Sigmoid colon (tissue), 7 donors: ENCODE measurements at regions of chr5 and their contacts with region 1.

Region 1: DNA sequence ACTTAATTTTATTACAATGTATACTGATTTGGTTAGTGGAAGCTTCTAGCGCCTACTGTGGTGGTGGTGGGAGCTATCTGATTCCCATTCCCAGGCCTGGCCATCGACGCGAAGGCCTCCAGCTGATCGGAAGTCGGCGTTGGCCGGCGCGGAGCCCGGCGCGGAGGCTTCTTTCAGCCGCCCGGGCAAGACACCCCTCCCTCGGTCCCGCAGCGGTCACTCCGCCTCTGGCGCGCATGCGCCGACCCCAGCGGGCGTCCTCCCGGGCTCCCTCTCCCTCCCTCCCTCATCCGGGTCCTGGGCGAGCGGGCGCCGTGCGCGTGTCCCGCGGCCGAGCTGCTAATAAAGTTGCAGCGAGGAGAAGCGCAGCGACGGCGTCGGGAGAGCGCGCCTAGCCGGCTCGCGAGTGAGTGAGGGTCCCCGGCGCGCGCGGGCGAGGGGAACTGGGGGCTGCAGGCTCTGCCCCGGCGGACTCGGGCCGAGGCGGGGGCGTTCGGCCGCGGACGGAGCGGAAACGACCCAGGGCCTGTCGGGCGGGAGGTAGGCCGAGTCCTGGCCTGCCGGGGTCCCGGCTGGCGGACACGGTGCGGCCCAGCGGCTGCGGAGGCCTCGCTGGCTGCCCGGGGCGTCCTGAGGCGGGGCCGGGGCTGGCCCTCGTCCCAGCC is at the start of gene SMAD5:
- DNase-seq: peak; percentile 98
- H3K4me3 ChIP-seq: peak within 1 kb of the TSS; percentile 59 to 86 (median 80)
- H3K27ac ChIP-seq: peak within 1 kb of the TSS; percentile 97 to 99 (median 98)
- H3K4me1 ChIP-seq: peaks cover 0 to 47% (median 32%) of the 10 kb centered on the region in 4 donors
- H3K27me3 ChIP-seq: no peaks in the 10 kb centered on the region
- CTCF ChIP-seq: no peak
- EP300 ChIP-seq: peak in 1 of 4 donors; percentile 44
- POLR2A ChIP-seq: peak; percentile 46 to 81
- total RNA-seq, gene SMAD5: 47.6 to 85.0 (median 59.8) TPM

Region 2: GRCh38 chr5:136080483-136081216 is 52.0 kb before region 1 on chr5:
- intact Hi-C with region 1: loop called (anchors 2 kb)
- DNase-seq: peak; percentile 94
- H3K4me3 ChIP-seq: peak overlapping the region; percentile 24 to 39 (median 34)
- H3K27ac ChIP-seq: peak overlapping the region; percentile 57 to 83 (median 66)
- H3K4me1 ChIP-seq: peaks cover 0 to 50% (median 11%) of the 10 kb centered on the region in 4 donors
- H3K27me3 ChIP-seq: no peaks in the 10 kb centered on the region
- CTCF ChIP-seq: no peak
- EP300 ChIP-seq: peak in 1 of 4 donors; percentile 61
- POLR2A ChIP-seq: peak; percentile 32 to 33

Region 3: GRCh38 chr5:136087961-136088871 is 44.5 kb before region 1 on chr5:
- intact Hi-C with region 1: loop called (anchors 2 kb)
- DNase-seq: peak; percentile 85
- H3K4me3 ChIP-seq: no peak overlapping the region
- H3K27ac ChIP-seq: peak overlapping the region in 3 of 4 donors; percentile 55 to 74 (median 67)
- H3K4me1 ChIP-seq: peaks cover 0 to 52% (median 24%) of the 10 kb centered on the region in 4 donors
- H3K27me3 ChIP-seq: no peaks in the 10 kb centered on the region
- CTCF ChIP-seq: no peak
- EP300 ChIP-seq: peak in 1 of 4 donors; percentile 63
- POLR2A ChIP-seq: no peak

Region 4: GRCh38 chr5:136166909-136167308 is 34.2 kb after region 1 on chr5:
- intact Hi-C with region 1: no loop called
- DNase-seq: no peak
- H3K4me3 ChIP-seq: no peak overlapping the region
- H3K27ac ChIP-seq: no peak overlapping the region
- H3K4me1 ChIP-seq: peaks cover 0 to 2% (median 0%) of the 10 kb centered on the region in 4 donors
- H3K27me3 ChIP-seq: no peaks in the 10 kb centered on the region
- CTCF ChIP-seq: no peak
- EP300 ChIP-seq: no peak
- POLR2A ChIP-seq: no peak

Region 5: DNA sequence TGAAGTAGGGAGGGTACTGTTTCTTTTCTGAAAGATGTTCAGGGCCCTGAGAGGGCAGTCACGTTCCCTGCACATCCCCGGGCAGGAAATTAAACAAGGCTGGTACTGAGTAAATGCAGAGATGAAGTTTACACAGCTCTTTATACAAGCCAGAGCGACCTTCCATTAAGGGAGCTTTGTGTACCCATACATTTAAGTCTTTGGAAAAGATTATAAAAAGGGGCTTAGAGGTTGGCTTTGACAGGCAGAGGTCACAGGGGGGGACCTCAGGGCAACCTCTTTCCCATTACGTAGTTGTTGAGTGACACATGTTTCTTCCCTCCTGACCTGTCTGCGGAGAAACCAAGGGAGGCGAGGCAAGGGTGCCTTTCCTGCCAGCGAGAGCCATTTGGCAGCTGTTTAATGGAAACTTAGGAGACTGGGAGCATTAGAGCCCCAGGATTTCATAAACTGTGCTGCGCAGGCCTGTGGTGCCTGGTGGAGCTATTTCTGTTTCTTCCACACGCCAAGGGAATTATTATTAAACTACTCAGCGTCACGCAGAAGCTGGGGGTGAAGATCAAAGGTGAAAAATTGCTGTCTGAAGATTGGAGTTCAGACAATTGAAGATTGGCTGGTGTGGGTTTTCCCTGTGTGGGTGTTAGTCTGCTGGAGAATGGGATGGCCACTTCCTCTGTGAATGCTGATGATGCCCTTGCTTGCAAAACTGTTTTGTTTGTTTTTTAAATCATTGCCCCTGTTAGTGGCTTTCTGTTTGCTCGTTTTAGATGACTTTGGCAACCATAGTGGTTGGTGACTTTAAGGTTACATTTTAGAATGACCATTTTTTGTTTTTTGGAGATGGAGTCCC is 63.5 kb after region 1 on chr5:
- intact Hi-C with region 1: loop called (anchors 2 kb)
- DNase-seq: peak; percentile 74
- H3K4me3 ChIP-seq: no peak overlapping the region
- H3K27ac ChIP-seq: peak overlapping the region in 3 of 4 donors; percentile 55 to 73 (median 71)
- H3K4me1 ChIP-seq: peaks cover 0 to 40% (median 37%) of the 10 kb centered on the region in 4 donors
- H3K27me3 ChIP-seq: peaks cover 6 to 28% (median 22%) of the 10 kb centered on the region in 3 donors
- CTCF ChIP-seq: no peak
- EP300 ChIP-seq: peak in 2 of 4 donors; percentile 9 to 13
- POLR2A ChIP-seq: no peak